ENCODE measurements at regions of chr3 and their contacts with region 1.

Region 1: GRCh38 chr3:138935848-138936740 is 10.8 kb downstream of the FOXL2 start:
- DNase-seq: peak; percentile 91
- ATAC-seq: peak; percentile 61
- H3K4me3 Mint-ChIP-seq: peak overlapping the region; percentile 77
- H3K27ac Mint-ChIP-seq: no peak overlapping the region
- H3K4me1 Mint-ChIP-seq: peaks cover 51% of the 10 kb centered on the region
- H3K27me3 Mint-ChIP-seq: peaks cover 72% of the 10 kb centered on the region
- CTCF ChIP-seq: peak; percentile 96

Region 2: DNA sequence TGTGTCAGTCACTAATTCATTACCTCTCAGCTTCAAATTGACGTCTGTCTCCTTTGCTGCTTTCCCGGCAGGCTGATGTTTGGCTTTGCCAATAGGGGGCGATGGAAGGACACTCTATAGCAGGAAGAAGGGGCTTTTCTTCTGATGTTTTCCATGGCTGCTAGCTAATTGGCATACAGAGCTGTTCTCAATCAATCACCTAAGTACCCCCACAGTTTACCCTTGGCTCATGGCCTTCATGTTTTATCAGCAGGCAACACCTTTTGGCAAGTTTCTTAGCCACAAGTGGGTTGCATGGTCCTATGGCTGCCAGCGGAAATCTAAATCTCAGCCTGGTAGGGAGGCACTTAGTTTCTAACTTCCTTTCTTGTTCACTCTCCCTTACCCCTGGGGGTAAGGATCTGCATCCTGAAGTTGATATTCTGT is 456.6 kb before region 1 on chr3:
- CTCF ChIA-PET with region 1: interaction called, 19 read pairs
- POLR2A ChIA-PET with region 1: no interaction called
- DNase-seq: peak; percentile 71
- ATAC-seq: peak; percentile 91
- H3K4me3 Mint-ChIP-seq: no peak overlapping the region
- H3K27ac Mint-ChIP-seq: no peak overlapping the region
- H3K4me1 Mint-ChIP-seq: peaks cover 4% of the 10 kb centered on the region
- H3K27me3 Mint-ChIP-seq: no peaks in the 10 kb centered on the region; the same call in 1 of the 2 replicates
- CTCF ChIP-seq: peak; percentile 57

Region 3: GRCh38 chr3:138923531-138923994 is 12.5 kb before region 1 on chr3:
- CTCF ChIA-PET with region 1: interaction called, 138 read pairs
- POLR2A ChIA-PET with region 1: interaction called, 4 read pairs
- DNase-seq: peak; percentile 95
- ATAC-seq: peak; percentile 94
- H3K4me3 Mint-ChIP-seq: no peak overlapping the region
- H3K27ac Mint-ChIP-seq: no peak overlapping the region
- H3K4me1 Mint-ChIP-seq: no peaks in the 10 kb centered on the region
- H3K27me3 Mint-ChIP-seq: no peaks in the 10 kb centered on the region; the same call in 1 of the 2 replicates
- CTCF ChIP-seq: peak; percentile 90

Region 4: DNA sequence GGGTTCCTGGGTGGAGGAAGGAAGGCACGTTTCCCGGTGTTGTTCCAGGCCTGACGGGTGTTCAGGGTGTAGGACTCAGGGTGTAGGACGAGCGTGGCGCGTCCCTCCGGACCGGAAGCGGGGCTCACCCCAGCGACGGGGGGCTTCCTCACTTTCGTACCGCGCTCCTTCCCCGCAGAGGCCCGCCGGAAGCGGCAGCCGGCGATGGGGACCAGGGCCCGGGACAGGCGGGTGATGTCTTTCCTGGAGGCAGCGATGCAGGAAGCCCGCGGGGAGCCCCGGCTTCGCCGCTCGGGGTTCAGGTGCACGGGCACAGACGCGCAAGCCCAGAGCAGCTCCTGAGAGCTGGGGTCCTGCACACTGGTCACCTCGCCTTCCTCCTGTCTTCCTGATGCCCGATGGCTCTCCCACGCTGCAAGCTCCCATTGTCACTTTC is 24.3 kb after region 1 on chr3:
- CTCF ChIA-PET with region 1: interaction called, 53 read pairs
- POLR2A ChIA-PET with region 1: interaction called, 4 read pairs
- DNase-seq: no peak
- ATAC-seq: no peak; the same call in 1 of the 2 replicates
- H3K4me3 Mint-ChIP-seq: peak overlapping the region; percentile 34
- H3K27ac Mint-ChIP-seq: no peak overlapping the region
- H3K4me1 Mint-ChIP-seq: peaks cover 3% of the 10 kb centered on the region; the same call in 1 of the 2 replicates
- H3K27me3 Mint-ChIP-seq: peaks cover 43% of the 10 kb centered on the region
- CTCF ChIP-seq: no peak

Region 5: DNA sequence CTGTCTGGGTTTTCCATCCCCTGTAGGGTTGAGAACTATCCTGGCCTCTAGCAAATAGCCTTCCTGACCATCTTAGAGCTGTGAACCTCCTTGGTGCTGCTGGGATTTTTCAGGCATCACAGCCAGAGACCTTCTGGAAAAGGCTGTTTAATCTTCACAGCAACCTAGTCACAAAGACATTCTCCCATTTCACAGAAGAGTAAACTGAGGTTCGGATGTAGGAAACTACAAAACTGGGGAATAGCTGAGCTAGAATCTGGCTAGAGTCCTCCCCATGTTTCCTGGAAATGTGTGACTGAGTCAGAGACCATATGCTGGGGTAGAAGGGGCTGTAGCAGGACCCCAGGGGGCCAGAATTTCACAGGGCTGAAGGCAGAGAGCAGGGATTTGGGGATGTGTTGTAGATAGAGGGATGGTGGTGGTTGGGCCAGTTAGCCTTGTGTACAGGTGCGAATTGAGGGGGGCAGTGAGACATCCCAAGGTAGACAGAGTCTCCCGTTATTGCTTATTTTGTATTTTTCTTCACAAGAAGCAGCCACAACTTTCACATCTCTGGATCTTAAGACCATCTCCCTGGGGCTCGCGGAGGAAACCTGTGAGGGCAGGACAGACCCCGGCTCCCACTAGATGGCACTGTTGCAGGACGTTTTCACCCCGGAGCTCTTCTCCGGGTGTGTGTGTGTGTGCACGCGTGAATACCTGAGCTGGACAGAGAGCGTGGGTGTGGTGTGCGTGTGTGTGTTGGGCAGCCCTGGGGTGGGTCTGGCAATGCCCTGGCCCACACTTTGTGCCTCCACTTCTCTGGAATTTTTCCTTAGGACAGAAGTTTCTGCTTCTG is 175.5 kb after region 1 on chr3:
- CTCF ChIA-PET with region 1: interaction called, 10 read pairs
- POLR2A ChIA-PET with region 1: no interaction called
- DNase-seq: peak; percentile 76
- ATAC-seq: peak; percentile 84
- H3K4me3 Mint-ChIP-seq: no peak overlapping the region
- H3K27ac Mint-ChIP-seq: no peak overlapping the region
- H3K4me1 Mint-ChIP-seq: no peaks in the 10 kb centered on the region
- H3K27me3 Mint-ChIP-seq: peaks cover 6% of the 10 kb centered on the region
- CTCF ChIP-seq: peak; percentile 63

Region 6: DNA sequence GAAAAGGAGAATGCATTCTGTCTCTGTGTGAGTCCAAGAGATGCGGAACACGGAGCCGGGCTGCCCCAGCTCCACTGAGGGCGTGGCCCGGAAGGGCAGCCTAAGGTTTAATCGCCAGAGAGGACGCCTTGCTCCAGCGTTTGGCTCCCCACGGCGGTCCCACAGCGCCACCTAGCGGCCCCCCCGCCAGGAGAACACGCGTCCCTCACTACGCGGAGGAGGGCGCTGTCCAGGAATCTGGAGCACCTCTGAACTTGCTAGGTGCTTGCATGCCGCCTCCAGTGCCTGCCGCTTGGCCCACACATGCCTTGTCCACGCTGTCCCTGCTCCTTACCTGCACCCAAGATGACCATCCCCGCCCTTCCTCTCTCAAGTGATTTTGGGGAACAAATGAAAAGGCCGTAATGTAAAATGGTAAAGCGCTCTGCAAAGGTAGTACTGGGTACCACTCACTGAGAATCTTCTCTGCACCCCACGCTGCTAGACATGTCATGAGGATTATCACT is 393.3 kb after region 1 on chr3:
- CTCF ChIA-PET with region 1: interaction called, 33 read pairs
- POLR2A ChIA-PET with region 1: no interaction called
- DNase-seq: peak; percentile 96
- ATAC-seq: peak; percentile 97
- H3K4me3 Mint-ChIP-seq: peak overlapping the region; percentile 56
- H3K27ac Mint-ChIP-seq: no peak overlapping the region
- H3K4me1 Mint-ChIP-seq: peaks cover 4% of the 10 kb centered on the region; the same call in 1 of the 2 replicates
- H3K27me3 Mint-ChIP-seq: peaks cover 60% of the 10 kb centered on the region
- CTCF ChIP-seq: peak; percentile 99

Measured in WTC11 (cell line).